PC-3 (cell line): ENCODE measurements at regions of chr6 and their contacts with region 1.

Region 1: DNA sequence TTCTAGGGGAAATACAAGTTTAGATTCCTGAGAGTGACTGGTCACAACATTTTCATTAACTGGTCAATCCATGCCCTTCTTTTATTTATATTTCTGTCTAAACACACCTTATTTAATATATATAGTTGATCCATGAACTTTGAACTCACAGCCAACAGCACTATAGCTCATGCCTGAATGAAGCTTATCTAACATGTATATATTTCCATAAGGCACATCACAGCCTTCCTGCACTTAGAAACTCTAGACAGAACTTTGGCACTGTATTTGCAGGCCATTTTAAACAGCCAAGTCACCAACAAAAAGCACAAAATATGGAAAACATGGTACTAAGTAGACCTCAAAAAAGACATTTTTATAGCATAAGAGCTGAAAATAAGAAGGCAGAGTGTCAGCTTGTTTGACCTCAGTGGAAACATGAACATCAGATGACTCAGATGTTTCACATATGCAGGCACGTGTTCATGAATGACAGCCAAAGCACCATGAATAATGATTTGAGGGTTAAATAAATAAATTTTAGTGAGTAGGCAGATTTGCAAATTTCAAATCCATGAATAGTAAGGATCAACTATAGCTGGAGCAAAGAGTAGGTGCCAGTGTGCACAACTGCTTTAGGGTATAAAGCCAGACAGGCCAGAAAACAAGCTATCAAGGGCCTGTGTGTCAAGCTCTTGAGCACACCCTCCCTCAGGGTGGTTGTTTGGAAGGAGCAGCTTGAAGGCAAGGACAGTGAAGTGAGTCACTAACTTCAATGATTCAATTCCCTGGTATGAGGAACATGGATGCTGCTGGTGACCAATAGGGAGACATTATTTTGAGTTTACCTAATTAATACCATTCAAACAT is 88.9 kb upstream of the NT5E start:
- DNase-seq: peak; percentile 91
- ATAC-seq: peak; percentile 88
- H3K4me3 ChIP-seq: no peak overlapping the region
- H3K27ac ChIP-seq: peak overlapping the region; percentile 82
- H3K4me1 ChIP-seq: peaks cover 51% of the 10 kb centered on the region
- H3K27me3 ChIP-seq: no peaks in the 10 kb centered on the region
- CTCF ChIP-seq: no peak

Region 2: DNA sequence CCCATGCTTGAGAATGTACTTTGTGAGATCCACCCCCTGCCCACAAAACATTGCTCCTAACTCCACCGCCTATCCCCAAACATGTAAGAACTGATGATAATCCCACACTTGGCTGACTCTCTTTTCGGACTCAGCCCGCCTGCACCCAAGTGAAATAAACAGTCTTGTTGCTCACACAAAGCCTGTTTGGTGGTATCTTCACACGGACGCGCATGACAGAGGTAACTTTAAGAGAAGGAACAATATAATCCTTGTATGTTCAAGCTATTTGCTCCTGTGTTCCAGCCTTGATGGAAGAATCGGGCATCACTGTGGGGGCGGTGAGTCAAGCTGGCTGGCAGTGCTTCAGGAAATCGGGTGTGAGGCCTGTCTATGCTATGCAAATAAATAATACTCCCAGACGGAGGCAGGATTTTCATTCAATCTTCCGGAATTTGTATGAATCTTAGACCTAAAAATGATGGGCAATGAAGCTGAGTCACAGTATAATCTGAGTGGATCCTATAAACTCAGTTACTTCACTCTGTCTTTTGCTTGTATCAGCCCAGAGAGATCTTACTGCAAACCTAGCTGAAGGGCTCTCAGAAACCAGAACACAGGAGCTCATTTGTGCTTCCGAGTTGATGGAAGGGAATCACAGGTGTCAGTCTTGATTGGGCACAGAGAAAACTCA is 43.6 kb after region 1 on chr6:
- CTCF ChIA-PET with region 1: no interaction called
- POLR2A ChIA-PET with region 1: no interaction called
- intact Hi-C with region 1: loop called (anchors 1 kb)
- DNase-seq: peak; percentile 94
- ATAC-seq: peak; percentile 74
- H3K4me3 ChIP-seq: peak overlapping the region; percentile 45; the same call in 1 of the 2 replicates
- H3K27ac ChIP-seq: peak overlapping the region; percentile 95
- H3K4me1 ChIP-seq: peaks cover 48% of the 10 kb centered on the region
- H3K27me3 ChIP-seq: no peaks in the 10 kb centered on the region
- CTCF ChIP-seq: no peak